ENCODE measurements at regions of chr3 and their contacts with region 1.

Region 1: GRCh38 chr3:16290007-16290826 is 25.2 kb downstream of the OXNAD1 start:
- DNase-seq: peak; percentile 81
- H3K4me3 Mint-ChIP-seq: peak overlapping the region; percentile 84
- H3K27ac Mint-ChIP-seq: peak overlapping the region; percentile 97
- H3K4me1 Mint-ChIP-seq: peaks cover 85% of the 10 kb centered on the region
- H3K27me3 Mint-ChIP-seq: no peaks in the 10 kb centered on the region

Region 2: GRCh38 chr3:14461748-14462324 is 1828.4 kb before region 1 on chr3:
- CTCF ChIA-PET with region 1: no interaction called
- intact Hi-C with region 1: no loop called
- DNase-seq: peak; percentile 77
- H3K4me3 Mint-ChIP-seq: no peak overlapping the region
- H3K27ac Mint-ChIP-seq: peak overlapping the region; percentile 59
- H3K4me1 Mint-ChIP-seq: peaks cover 36% of the 10 kb centered on the region
- H3K27me3 Mint-ChIP-seq: no peaks in the 10 kb centered on the region

Region 3: DNA sequence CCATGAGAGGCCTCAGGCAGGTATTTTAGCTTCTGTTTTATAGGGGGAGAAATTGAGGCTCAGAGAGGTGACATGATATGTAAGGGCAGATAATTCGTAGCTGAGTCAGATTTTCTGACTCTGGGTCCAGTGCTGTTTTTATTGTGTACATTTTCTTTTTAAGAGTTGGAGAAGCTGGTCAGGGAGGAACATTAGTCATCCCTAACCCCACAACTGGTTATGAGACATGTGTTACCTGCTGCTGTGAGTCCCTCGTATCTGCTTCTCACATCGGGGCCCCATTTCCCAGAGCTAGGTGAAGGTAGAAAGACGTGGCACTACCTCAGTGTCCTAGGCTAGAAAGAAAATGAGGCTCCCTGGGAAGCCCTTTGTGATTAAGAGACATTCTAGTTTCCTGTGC is 87.2 kb before region 1 on chr3:
- CTCF ChIA-PET with region 1: no interaction called
- intact Hi-C with region 1: no loop called
- DNase-seq: peak; percentile 12
- H3K4me3 Mint-ChIP-seq: no peak overlapping the region
- H3K27ac Mint-ChIP-seq: no peak overlapping the region
- H3K4me1 Mint-ChIP-seq: peaks cover 4% of the 10 kb centered on the region
- H3K27me3 Mint-ChIP-seq: no peaks in the 10 kb centered on the region

Region 4: GRCh38 chr3:16270855-16271254 is 19.4 kb before region 1 on chr3:
- CTCF ChIA-PET with region 1: interaction called, 38 read pairs
- intact Hi-C with region 1: no loop called
- DNase-seq: no peak
- H3K4me3 Mint-ChIP-seq: no peak overlapping the region
- H3K27ac Mint-ChIP-seq: no peak overlapping the region
- H3K4me1 Mint-ChIP-seq: peaks cover 26% of the 10 kb centered on the region
- H3K27me3 Mint-ChIP-seq: no peaks in the 10 kb centered on the region

Region 5: DNA sequence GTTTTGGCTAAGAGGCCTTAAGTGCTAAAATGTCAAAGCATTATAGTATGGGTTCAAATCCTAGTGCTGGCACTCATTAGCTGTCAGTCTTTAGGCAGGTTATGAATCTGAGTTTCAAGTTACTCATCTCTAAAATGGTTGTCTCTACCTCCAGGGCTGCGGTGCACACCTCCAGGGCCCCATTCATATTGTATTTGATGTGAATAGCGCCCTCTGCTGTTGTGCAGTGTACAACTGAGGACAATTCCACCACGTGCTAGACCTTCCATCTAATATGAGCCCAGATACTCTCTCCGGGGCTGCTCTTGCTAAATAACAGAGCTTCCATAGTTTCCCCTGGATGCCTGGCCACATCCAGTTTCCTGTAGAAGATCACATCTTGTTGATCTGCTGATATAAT is 29.1 kb after region 1 on chr3:
- CTCF ChIA-PET with region 1: interaction called, 222 read pairs
- intact Hi-C with region 1: loop called (anchors 1 kb)
- DNase-seq: peak; percentile 97
- H3K4me3 Mint-ChIP-seq: peak overlapping the region; percentile 6
- H3K27ac Mint-ChIP-seq: peak overlapping the region; percentile 95
- H3K4me1 Mint-ChIP-seq: peaks cover 79% of the 10 kb centered on the region
- H3K27me3 Mint-ChIP-seq: no peaks in the 10 kb centered on the region

Region 6: GRCh38 chr3:16467393-16467792 is 177.2 kb after region 1 on chr3:
- CTCF ChIA-PET with region 1: interaction called, 3 read pairs
- intact Hi-C with region 1: loop called (anchors 2 kb)
- DNase-seq: peak; percentile 84
- H3K4me3 Mint-ChIP-seq: peak overlapping the region; percentile 50
- H3K27ac Mint-ChIP-seq: peak overlapping the region; percentile 79
- H3K4me1 Mint-ChIP-seq: peaks cover 66% of the 10 kb centered on the region
- H3K27me3 Mint-ChIP-seq: no peaks in the 10 kb centered on the region

Region 7: DNA sequence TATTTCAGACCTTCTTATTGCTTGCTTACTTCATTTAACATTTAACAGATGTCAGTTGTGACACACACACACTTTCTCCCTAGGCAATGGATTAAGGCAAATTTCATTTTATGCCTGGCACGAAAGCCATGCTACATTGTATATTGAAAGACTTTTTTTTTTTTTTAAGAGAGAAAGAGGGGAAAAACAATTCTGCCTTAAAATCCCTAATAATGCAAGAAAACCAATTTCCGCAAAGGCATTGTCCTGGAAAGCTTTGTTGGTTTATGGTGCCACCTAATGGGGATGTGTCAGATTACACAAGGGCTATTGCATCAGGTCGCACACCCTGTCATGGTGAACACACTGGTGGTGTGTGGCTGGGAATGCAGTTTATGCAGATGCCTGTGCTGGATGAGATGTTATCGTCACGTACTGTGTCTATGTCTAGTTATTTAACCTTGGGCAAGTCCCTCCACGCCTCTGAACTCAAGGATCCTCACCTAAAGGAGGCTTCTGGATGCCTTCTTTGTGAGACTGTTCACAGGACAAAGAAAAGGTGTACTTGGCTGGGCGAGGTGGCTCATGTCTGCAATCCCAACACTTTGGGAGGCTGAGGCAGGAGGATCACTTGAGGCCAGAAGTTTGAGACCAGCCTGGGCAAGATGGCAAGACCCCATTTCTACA is 260.6 kb after region 1 on chr3:
- CTCF ChIA-PET with region 1: interaction called, 10 read pairs
- intact Hi-C with region 1: loop called (anchors 1 kb)
- DNase-seq: peak; percentile 94
- H3K4me3 Mint-ChIP-seq: peak overlapping the region; percentile 22
- H3K27ac Mint-ChIP-seq: peak overlapping the region; percentile 77
- H3K4me1 Mint-ChIP-seq: peaks cover 17% of the 10 kb centered on the region
- H3K27me3 Mint-ChIP-seq: no peaks in the 10 kb centered on the region

Region 8: GRCh38 chr3:16842272-16843270 is 552.4 kb after region 1 on chr3:
- CTCF ChIA-PET with region 1: no interaction called
- intact Hi-C with region 1: no loop called
- DNase-seq: peak; percentile 91
- H3K4me3 Mint-ChIP-seq: peak overlapping the region; percentile 72
- H3K27ac Mint-ChIP-seq: peak overlapping the region; percentile 93
- H3K4me1 Mint-ChIP-seq: peaks cover 68% of the 10 kb centered on the region
- H3K27me3 Mint-ChIP-seq: no peaks in the 10 kb centered on the region

Region 9: GRCh38 chr3:17023006-17023664 is 732.9 kb after region 1 on chr3:
- CTCF ChIA-PET with region 1: no interaction called
- intact Hi-C with region 1: loop called (anchors 5 kb)
- DNase-seq: peak; percentile 82
- H3K4me3 Mint-ChIP-seq: peak overlapping the region; percentile 60
- H3K27ac Mint-ChIP-seq: peak overlapping the region; percentile 90
- H3K4me1 Mint-ChIP-seq: peaks cover 73% of the 10 kb centered on the region
- H3K27me3 Mint-ChIP-seq: no peaks in the 10 kb centered on the region